Left ventricle myocardium inferior (tissue), 1 donor: ENCODE measurements at regions of chrX and their contacts with region 1.

Region 1: DNA sequence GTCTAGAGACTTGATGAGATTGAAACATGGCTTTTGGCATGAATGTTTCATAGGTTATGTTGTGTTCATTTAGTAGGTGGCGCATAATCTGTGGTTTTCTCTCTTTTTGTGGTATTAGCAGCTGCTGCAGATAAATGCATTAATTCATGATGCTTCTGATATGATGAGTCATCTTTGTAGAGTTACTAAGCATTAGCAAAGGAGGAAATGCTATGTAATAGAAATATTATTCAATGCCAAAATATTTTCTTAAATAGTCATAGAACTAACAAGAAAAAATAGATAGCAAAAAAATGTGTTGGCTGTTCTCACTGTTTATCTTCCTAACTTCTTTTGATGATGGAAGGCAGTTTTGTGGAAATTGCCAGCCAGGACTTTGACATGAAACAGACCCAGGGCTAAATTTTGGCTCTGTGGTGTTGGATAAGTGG is 3.6 kb downstream of the ZXDB start:
- DNase-seq: no peak
- H3K4me3 ChIP-seq: peak overlapping the region; percentile 49
- H3K27ac ChIP-seq: peak overlapping the region; percentile 60
- H3K4me1 ChIP-seq: peaks cover 42% of the 10 kb centered on the region
- H3K27me3 ChIP-seq: no peaks in the 10 kb centered on the region
- CTCF ChIP-seq: no peak

Region 2: GRCh38 chrX:57900975-57901374 is 305.6 kb after region 1 on chrX:
- intact Hi-C with region 1: loop called (anchors 10 kb)
- DNase-seq: no peak
- H3K4me3 ChIP-seq: peak overlapping the region; percentile 45
- H3K27ac ChIP-seq: peak overlapping the region; percentile 82
- H3K4me1 ChIP-seq: peaks cover 58% of the 10 kb centered on the region
- H3K27me3 ChIP-seq: no peaks in the 10 kb centered on the region
- CTCF ChIP-seq: no peak